OCI-LY7 (cell line): ENCODE measurements at regions of chr12 and their contacts with region 1.

Region 1: DNA sequence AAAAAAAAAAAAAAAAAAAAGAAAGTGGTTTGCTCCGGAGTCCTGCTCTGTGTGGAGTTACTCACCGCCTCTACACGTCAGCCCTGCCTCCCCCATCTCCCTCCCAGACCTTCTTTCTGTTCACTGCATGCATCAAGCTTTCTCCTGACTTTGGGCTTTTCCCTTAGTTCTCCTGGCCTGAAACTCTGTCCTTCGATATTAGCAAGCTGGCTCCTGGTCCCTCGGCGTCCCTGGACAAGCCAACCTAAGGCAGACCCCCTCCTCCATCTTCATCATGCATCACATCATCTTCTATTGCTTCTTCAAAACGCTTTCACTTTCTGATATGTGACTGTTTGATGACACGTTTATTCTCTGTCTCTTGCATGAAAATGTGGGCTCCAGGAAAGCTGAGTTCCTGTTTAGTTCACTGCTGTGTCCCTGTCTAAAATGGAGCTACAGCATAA is 40.6 kb downstream of the SLC15A4 start:
- DNase-seq: no peak
- H3K4me3 ChIP-seq: no peak overlapping the region
- H3K27ac ChIP-seq: no peak overlapping the region
- H3K4me1 ChIP-seq: peaks cover 34% of the 10 kb centered on the region
- CTCF ChIP-seq: no peak

Region 2: DNA sequence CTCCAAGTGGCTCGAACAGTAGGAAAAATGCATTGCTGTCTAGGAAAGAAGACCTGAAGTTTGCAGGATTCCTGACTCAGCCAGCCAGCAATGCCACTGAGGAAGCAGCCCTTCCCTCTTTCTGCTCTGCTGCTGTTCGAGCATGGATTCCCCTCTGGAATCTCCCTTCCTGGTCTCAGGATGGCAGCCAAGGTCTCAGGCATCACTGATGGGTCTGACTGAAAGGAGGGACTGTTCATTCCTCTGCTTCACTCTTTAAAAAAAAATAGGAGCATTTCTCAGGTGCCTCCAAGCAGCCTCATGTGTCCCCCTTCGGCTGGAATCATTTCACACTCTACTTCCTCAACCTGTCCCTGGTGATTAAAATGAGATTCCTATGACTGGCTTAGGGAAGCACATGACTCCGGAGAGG is 21.8 kb before region 1 on chr12:
- CTCF ChIA-PET with region 1: no interaction called
- POLR2A ChIA-PET with region 1: no interaction called
- intact Hi-C with region 1: no loop called
- DNase-seq: no peak
- H3K4me3 ChIP-seq: no peak overlapping the region
- H3K27ac ChIP-seq: no peak overlapping the region
- H3K4me1 ChIP-seq: no peaks in the 10 kb centered on the region
- CTCF ChIP-seq: no peak

Region 3: GRCh38 chr12:128823916-128824839 is 41.0 kb after region 1 on chr12 and contains the start of gene SLC15A4:
- CTCF ChIA-PET with region 1: no interaction called
- POLR2A ChIA-PET with region 1: interaction called, 3 read pairs
- intact Hi-C with region 1: loop called (anchors 5 kb)
- DNase-seq: peak; percentile 96
- H3K4me3 ChIP-seq: peak within 1 kb of the TSS; percentile 99
- H3K27ac ChIP-seq: peak within 1 kb of the TSS; percentile 84
- H3K4me1 ChIP-seq: peaks cover 69% of the 10 kb centered on the region
- CTCF ChIP-seq: no peak; the same call in 1 of the 2 replicates
- total RNA-seq, gene SLC15A4: 46.7 and 53.3 TPM in 2 replicates

Region 4: GRCh38 chr12:128959901-128960300 is 176.7 kb after region 1 on chr12:
- CTCF ChIA-PET with region 1: no interaction called
- POLR2A ChIA-PET with region 1: no interaction called
- intact Hi-C with region 1: loop called (anchors 5 kb)
- DNase-seq: no peak
- H3K4me3 ChIP-seq: no peak overlapping the region
- H3K27ac ChIP-seq: no peak overlapping the region
- H3K4me1 ChIP-seq: no peaks in the 10 kb centered on the region
- CTCF ChIP-seq: no peak